ENCODE measurements at regions of chr1 and their contacts with region 1.

Region 1: DNA sequence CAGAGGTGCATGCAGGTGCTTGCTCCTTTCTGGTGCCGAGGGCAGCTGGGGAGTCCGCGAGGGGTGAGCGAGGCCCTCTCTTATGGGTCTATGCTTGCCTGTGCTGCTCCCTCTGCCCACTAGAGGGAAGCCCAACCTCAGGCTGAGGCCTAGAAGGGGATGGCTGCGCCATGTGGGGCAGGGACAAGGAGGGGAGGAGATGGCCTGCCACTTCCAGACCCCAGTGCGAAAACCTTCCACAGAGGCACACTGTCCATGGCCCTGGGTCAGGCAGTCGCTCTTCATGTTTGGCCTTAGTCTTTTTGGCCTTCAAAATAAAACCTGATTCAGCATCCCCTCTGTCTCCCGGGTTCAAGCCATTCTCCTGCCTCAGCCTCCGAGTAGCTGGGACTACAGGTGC is 14.0 kb downstream of the RHBG start:
- DNase-seq: no peak
- H3K4me3 ChIP-seq: no peak overlapping the region
- CTCF ChIP-seq: peak; percentile 93

Region 2: GRCh38 chr1:156257711-156258110 is 125.3 kb before region 1 on chr1:
- CTCF ChIA-PET with region 1: no interaction called
- POLR2A ChIA-PET with region 1: no interaction called
- DNase-seq: no peak
- H3K4me3 ChIP-seq: no peak overlapping the region
- CTCF ChIP-seq: no peak

Region 3: DNA sequence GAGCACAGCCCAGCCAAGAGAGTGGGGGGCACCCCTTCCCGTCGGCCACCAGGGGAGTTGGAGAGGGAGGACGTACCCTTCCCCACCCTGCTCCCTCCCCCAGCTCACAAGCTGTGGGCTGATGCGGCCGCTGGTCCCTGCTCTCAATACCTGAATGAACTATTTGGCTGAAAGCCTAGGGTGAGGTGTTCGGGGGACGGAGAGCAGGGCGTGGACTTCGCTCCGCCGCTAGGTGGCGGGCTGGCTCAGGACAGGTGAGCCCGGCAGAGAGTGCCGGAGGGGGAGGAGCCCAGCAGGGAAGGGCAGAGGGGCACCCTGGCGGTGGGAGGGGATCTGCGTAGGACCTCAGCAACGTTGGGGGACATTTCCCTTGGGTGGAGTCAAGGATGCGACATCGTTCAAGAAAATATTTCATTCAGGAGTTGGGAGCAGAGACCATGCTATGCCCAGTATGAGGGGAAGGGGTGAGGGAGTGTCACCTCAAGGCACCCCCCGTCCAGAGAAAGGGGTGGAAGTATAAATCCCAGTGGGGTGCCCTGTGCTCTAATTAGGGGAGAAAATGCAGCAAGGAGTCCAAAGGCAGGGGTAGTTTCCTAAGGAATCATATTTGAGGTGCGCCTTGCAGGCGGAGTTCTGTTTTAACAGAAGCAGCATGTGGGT is 26.0 kb before region 1 on chr1:
- CTCF ChIA-PET with region 1: interaction called, 32 read pairs
- POLR2A ChIA-PET with region 1: no interaction called
- DNase-seq: no peak
- H3K4me3 ChIP-seq: no peak overlapping the region
- CTCF ChIP-seq: no peak

Region 4: GRCh38 chr1:156407344-156407743 is 24.3 kb after region 1 on chr1:
- CTCF ChIA-PET with region 1: interaction called, 97 read pairs
- POLR2A ChIA-PET with region 1: no interaction called
- DNase-seq: no peak
- H3K4me3 ChIP-seq: no peak overlapping the region
- CTCF ChIP-seq: no peak

Region 5: DNA sequence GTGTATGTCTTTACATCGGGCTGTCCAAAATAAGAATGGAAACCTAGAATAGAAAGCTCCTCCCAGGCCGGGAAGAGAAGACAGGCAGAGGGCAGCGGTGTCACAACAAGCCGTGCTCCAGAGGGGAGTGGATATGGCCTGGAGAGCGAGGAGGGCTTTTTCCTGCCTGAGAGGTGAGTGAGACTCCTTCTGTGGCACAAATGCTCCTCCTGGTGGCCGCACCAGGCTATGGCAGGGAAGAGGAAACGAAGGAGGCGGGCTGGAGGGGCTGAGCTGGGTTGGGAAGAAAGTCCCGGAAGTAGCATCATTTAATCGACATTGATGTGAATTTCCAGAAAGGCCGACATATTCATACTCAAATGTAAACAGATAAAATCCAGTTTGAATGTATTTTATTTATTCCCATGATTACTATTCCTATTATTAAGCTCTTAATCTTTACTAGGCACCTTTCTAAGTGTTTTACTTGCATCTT is 62.8 kb after region 1 on chr1:
- CTCF ChIA-PET with region 1: interaction called, 712 read pairs
- POLR2A ChIA-PET with region 1: interaction called, 9 read pairs
- DNase-seq: no peak
- H3K4me3 ChIP-seq: no peak overlapping the region
- CTCF ChIP-seq: peak; percentile 98

Region 6: GRCh38 chr1:156500797-156501499 is 117.9 kb after region 1 on chr1:
- CTCF ChIA-PET with region 1: interaction called, 11 read pairs
- POLR2A ChIA-PET with region 1: no interaction called
- DNase-seq: peak; percentile 63
- H3K4me3 ChIP-seq: peak overlapping the region; percentile 96
- CTCF ChIP-seq: peak; percentile 52

Region 7: GRCh38 chr1:156608036-156608674 is 225.1 kb after region 1 on chr1:
- CTCF ChIA-PET with region 1: interaction called, 88 read pairs
- POLR2A ChIA-PET with region 1: interaction called, 3 read pairs
- DNase-seq: no peak
- H3K4me3 ChIP-seq: no peak overlapping the region
- CTCF ChIP-seq: peak; percentile 82

Region 8: DNA sequence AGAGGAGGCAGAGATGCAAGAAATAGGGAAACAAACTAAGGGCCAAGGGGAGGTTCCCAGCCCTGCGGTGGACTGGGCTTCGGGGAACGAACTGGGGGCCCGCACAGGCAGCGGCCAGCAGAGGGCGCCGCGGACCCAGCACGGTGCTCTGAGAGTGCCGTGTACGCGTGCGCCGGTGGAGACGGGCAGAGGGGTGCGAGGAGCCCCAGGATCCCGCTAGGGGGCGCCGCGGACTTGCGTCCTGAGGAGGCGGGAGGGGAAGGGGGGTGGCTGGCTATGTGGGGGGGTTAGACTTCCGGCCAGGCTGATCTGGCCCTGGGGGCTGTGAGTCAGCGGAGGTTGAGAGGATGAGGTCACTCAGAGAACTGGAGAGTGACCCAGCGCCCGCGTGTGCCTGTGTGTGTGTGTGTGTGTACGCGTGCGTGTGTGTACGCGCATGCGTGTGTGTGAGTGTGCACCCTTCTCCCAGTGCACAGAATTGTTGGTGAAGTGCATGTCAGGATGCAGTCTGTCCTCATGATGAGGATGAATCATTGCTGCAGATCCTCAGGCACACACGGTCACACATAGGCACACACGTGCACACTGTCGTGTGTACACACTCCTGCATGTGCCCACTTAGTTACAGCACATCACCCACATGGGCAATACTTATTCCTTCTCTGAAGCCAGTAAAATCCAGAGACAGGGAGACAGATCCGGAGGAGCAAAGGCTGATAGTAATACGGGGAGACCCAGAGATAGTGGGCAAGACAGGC is 277.1 kb after region 1 on chr1:
- CTCF ChIA-PET with region 1: interaction called, 24 read pairs
- POLR2A ChIA-PET with region 1: no interaction called
- DNase-seq: peak; percentile 77
- H3K4me3 ChIP-seq: no peak overlapping the region
- CTCF ChIP-seq: peak; percentile 100

Measured in AG04449 (cell line).